ENCODE measurements at regions of chr1 and their contacts with region 1.

Region 1: DNA sequence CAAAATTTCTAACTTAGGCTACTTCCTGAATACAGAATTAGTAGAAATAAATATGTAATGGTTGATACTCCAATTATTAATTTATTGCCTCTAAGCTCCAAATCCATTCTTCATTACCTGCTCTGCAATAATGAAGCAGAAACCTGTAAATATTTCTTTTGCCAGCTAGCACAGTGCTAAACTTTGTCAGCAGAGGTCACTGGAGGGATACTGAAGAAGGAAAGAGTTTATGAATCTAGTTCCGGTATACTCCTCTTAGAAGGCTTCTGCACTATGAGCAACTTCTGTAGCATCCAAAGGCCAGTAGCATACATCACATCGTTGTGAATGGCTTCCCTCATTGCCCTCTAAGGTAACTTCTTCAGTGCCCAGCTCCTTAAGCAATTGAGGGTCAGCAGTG is 81.0 kb upstream of the LHX8 start:
- DNase-seq: no peak
- ATAC-seq: no peak
- H3K4me3 ChIP-seq: no peak overlapping the region
- H3K27ac ChIP-seq: no peak overlapping the region
- H3K4me1 ChIP-seq: no peaks in the 10 kb centered on the region
- H3K27me3 ChIP-seq: no peaks in the 10 kb centered on the region
- CTCF ChIP-seq: no peak

Region 2: GRCh38 chr1:74971982-74972381 is 81.2 kb before region 1 on chr1:
- intact Hi-C with region 1: no loop called
- DNase-seq: no peak
- ATAC-seq: no peak
- H3K4me3 ChIP-seq: no peak overlapping the region
- H3K27ac ChIP-seq: no peak overlapping the region
- H3K4me1 ChIP-seq: no peaks in the 10 kb centered on the region
- H3K27me3 ChIP-seq: no peaks in the 10 kb centered on the region
- CTCF ChIP-seq: no peak

Region 3: GRCh38 chr1:75100481-75101092 is 47.4 kb after region 1 on chr1:
- intact Hi-C with region 1: loop called in 1 of 10 experiments (anchors 1 kb)
- DNase-seq: no peak
- ATAC-seq: no peak
- H3K4me3 ChIP-seq: no peak overlapping the region
- H3K27ac ChIP-seq: no peak overlapping the region
- H3K4me1 ChIP-seq: no peaks in the 10 kb centered on the region
- H3K27me3 ChIP-seq: no peaks in the 10 kb centered on the region
- CTCF ChIP-seq: no peak

Measured in heart right ventricle (tissue), 16 donors.